ENCODE measurements at regions of chr22 and their contacts with region 1.

Region 1: DNA sequence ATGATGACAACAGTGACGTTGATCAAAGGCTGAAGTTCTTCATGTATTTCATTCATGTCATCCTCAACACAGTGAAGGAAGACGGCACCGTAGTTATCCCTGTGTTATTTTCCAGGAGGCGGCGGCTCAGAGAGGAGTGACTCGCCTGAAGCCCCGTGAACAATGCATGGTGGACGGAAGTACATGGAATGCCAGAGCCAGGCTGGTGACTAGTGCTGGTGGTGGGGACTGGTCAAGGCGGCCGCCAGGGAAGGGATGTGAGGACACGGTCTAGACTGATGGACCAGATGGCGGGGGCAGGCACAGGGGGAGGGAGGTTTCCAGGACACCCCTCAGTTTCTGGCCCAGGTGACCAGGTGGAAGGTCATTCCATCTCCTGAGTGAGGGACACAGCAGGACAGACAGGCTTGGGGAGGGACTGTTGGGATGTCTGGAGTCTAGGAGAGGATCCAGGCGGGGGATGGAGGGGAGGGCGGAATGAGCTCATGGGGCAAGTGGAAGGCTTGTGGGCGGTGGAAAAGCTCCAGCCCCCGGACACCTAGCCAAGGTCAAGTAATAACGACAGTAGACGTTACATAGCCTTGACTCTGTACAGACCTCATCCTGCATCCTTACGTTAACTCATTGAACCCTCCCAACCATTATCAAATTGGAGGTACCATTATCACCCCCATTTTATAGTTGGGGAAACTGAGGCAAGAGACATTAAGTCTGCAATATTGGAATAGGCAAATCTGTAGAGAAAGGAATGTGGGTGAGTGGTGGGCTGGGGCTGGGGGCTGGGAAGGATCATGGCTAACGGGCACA is 16.0 kb upstream of the PICK1 start:
- DNase-seq: no peak
- ATAC-seq: no peak
- H3K4me3 ChIP-seq: no peak overlapping the region
- H3K4me3 Mint-ChIP-seq: no peak overlapping the region
- H3K27ac ChIP-seq: no peak overlapping the region
- H3K27ac Mint-ChIP-seq: no peak overlapping the region
- H3K4me1 ChIP-seq: no peaks in the 10 kb centered on the region
- H3K4me1 Mint-ChIP-seq: no peaks in the 10 kb centered on the region
- H3K27me3 ChIP-seq: no peaks in the 10 kb centered on the region
- H3K27me3 Mint-ChIP-seq: no peaks in the 10 kb centered on the region
- CTCF ChIP-seq: no peak

Region 2: DNA sequence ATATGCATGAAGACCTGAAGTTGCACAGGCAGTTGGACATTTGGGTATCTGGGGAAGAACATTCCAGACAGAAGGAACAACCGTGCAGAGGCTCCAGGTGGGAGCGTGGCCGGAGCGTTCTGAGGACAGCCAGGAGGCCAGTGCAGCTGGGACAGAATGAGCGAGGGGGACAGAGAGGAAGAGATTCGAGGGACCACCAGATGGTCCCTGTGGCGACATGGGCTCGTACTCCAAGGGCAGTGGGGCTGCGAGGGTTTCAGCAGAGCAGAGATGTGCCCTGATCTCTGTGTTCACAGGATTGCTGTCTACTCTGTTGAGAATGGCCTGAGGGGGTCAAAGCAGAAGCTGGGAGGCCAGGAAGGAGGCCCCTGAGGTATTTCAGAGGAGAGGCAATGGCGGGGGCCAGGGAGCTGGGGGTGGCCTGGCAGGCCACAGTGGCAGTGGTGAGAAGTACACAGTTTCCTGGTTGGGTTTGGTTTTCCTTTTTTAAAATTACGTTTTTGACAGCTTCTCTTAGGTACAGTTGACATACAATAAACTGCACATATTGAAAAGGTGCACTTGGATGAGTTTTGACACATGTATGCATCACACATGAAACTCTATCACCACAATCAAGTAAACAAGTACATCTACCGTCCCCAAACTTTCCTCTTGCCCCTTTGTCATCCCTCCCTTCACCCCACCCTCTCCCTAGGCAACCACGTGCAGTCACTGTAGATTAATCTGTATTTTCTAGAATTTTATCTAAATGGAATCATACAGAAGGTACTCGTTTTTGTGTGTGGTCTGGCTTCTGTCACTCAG is 32.0 kb before region 1 on chr22:
- CTCF ChIA-PET with region 1: no interaction called
- POLR2A ChIA-PET with region 1: no interaction called
- intact Hi-C with region 1: no loop called
- DNase-seq: peak in 1 of 9 experiments; percentile 39
- ATAC-seq: no peak
- H3K4me3 ChIP-seq: no peak overlapping the region
- H3K4me3 Mint-ChIP-seq: peak overlapping the region; percentile 16
- H3K27ac ChIP-seq: peak overlapping the region in 1 of 2 experiments; percentile 54
- H3K27ac Mint-ChIP-seq: peak overlapping the region; percentile 70
- H3K4me1 ChIP-seq: no peaks in the 10 kb centered on the region
- H3K4me1 Mint-ChIP-seq: peaks cover 19% of the 10 kb centered on the region
- H3K27me3 ChIP-seq: no peaks in the 10 kb centered on the region
- H3K27me3 Mint-ChIP-seq: no peaks in the 10 kb centered on the region
- CTCF ChIP-seq: no peak

Region 3: DNA sequence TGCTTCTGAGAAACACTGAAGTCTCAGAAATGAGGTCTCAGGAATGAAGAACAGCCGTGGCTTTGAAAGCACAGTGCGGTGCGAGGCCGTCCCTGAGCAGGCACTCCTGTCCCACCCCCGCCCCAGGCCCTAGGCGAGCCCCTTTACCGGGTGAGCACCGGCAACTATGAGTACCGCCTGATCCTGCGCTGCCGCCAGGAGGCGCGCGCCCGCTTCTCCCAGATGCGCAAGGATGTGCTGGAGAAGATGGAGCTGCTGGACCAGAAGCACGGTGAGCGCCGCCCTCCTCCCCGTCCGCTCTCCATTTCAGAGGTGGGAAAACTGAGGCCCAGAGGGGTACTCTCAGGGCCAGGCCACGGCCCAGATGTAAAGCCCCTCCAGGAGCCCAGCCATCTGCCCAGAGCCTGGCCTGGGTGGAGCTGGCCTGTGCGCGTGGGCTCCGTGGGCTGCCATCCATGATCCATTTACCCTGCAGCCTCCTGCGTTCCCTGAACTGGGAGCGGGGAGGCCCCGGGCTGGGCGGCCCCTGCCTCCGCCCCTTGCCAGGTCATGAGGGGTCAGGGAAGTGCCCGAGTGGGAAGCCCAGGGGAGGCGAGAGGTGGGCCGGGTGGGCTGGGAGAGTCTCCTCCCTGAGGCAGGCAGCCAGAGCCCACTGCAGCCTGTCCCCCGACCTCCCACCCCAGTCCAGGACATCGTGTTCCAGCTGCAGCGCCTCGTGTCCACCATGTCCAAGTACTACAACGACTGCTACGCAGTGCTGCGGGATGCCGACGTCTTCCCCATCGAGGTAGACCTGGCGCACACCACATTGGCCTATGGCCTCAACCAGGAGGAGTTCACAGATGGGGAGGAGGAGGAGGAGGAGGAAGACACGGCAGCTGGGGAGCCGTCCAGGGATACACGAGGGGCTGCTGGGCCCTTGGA is 33.3 kb after region 1 on chr22:
- CTCF ChIA-PET with region 1: no interaction called
- POLR2A ChIA-PET with region 1: no interaction called
- intact Hi-C with region 1: loop called in 1 of 2 experiments (anchors 5 kb)
- DNase-seq: no peak
- ATAC-seq: no peak
- H3K4me3 ChIP-seq: no peak overlapping the region
- H3K4me3 Mint-ChIP-seq: no peak overlapping the region
- H3K27ac ChIP-seq: no peak overlapping the region
- H3K27ac Mint-ChIP-seq: no peak overlapping the region
- H3K4me1 ChIP-seq: no peaks in the 10 kb centered on the region
- H3K4me1 Mint-ChIP-seq: no peaks in the 10 kb centered on the region
- H3K27me3 ChIP-seq: no peaks in the 10 kb centered on the region
- H3K27me3 Mint-ChIP-seq: peaks cover under 1% of the 10 kb centered on the region
- CTCF ChIP-seq: no peak

Measured in CD8-positive, alpha-beta T cell (primary cell).